Activated T-helper 1 cell treated with anti-CD3 and anti-CD28 coated beads, Interleukin-12 subunit alpha, Interleukin-12 subunit beta, Interleukin-2, Interleukin-4 antibody, amounts not matched to agents 30 ng/mL and 10 ng/mL and 1 ng/mL, durations not matched to agents 14 hours and 24 hours and 36 hours (primary cell): ENCODE measurements at regions of chr2 and their contacts with region 1.

Region 1: DNA sequence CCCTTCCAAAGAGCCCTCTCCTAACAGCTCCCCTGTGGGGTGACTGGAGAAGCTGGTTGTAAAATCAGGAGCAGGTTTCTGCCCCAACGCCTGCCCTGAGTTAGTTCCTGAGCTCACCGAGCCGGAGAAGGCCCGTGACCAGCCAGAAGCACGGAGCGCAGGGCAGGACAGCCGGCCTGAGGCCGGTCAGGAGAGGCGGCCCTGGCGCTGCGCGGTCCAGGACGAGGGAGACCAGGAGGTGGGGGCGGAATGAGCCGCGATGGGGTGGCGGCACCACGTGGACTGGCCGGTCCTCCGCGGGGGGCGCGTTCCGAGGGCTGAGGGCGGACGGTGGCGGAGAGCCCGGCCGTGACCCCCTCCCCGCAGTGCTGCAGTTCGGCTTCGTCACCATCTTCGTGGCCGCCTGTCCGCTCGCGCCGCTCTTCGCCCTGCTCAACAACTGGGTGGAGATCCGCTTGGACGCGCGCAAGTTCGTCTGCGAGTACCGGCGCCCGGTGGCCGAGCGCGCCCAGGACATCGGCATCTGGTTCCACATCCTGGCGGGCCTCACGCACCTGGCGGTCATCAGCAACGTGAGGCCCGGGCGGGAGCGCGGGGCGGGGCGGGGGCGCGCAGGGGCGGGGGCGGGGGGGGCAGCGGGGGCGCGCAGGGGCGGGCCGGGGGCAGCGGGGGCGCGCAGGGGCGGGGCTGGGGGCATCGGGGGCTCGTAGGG is 29.0 kb downstream of the ANO7 start:
- DNase-seq: peak; percentile 20
- H3K4me3 Mint-ChIP-seq: peak overlapping the region; percentile 63
- H3K27ac Mint-ChIP-seq: no peak overlapping the region
- H3K4me1 Mint-ChIP-seq: peaks cover 18% of the 10 kb centered on the region
- H3K27me3 Mint-ChIP-seq: peaks cover 25% of the 10 kb centered on the region

Region 2: GRCh38 chr2:240851078-240851991 is 366.1 kb before region 1 on chr2:
- intact Hi-C with region 1: loop called (anchors 5 kb)
- DNase-seq: peak; percentile 65
- H3K4me3 Mint-ChIP-seq: no peak overlapping the region
- H3K27ac Mint-ChIP-seq: no peak overlapping the region
- H3K4me1 Mint-ChIP-seq: no peaks in the 10 kb centered on the region
- H3K27me3 Mint-ChIP-seq: no peaks in the 10 kb centered on the region

Region 3: DNA sequence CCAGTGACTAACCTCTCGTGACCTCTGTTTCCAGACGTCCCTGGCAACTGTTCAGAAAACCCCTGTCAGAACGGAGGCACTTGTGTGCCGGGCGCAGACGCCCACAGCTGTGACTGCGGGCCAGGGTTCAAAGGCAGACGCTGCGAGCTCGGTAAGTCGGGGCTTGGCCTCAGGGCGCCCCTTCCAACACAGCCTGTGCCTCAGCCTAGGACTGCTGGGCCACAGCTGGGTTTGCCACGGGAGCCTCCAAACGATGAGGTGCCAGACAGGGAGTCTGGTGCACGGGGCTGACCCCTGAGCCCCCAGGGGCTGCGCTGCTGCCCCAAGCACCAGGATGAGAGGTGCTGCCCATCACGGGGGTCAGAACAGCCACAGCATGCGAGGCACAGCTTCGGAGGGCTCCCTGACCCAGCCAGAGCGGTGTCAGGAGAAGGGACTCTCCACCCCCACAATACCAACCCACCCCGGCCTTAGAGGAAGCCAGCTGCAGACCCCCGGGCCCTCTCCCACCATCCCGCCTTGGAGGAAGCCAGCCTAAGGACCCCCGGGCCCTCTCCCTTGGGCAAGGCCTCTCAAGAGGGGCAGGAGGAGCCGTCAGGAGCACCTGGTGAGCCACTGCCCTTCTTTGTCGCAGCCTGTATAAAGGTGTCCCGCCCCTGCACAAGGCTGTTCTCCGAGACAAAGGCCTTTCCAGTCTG is 135.7 kb before region 1 on chr2:
- intact Hi-C with region 1: loop called (anchors 1 kb)
- DNase-seq: no peak
- H3K4me3 Mint-ChIP-seq: no peak overlapping the region
- H3K27ac Mint-ChIP-seq: no peak overlapping the region
- H3K4me1 Mint-ChIP-seq: no peaks in the 10 kb centered on the region
- H3K27me3 Mint-ChIP-seq: no peaks in the 10 kb centered on the region

Region 4: DNA sequence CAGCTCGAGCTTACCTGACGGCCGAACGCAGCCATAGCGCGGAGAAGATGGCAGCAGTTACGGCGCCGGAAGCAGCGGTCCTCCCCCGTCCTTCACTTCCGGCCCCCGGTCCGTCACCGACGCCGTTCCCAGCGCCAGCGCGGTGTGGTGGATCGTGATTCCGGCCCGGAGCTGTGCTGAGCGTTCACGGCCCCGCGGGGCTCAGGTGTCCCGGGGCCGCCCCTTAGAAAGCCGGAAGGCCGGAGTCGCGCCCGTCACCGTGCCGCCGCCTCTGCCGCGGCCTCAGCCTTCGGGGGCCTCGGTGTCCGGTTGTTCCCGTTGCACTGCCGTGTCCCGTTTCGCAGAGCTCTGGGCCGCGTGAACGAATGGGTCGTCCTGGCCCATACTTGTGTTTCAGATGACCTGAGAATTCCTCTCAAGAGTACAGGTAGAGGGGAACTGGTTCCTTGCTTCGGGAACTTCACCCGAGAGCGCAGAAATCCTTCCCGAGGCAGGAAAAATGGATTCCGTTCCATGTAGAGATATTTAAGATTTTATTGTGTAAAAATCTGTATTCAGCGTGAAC is 115.2 kb before region 1 on chr2 and contains the start of gene MTERF4:
- intact Hi-C with region 1: loop called (anchors 2 kb)
- DNase-seq: peak; percentile 86
- H3K4me3 Mint-ChIP-seq: peak within 1 kb of the TSS; percentile 94
- H3K27ac Mint-ChIP-seq: peak within 1 kb of the TSS; percentile 98
- H3K4me1 Mint-ChIP-seq: peaks cover 41% of the 10 kb centered on the region
- H3K27me3 Mint-ChIP-seq: no peaks in the 10 kb centered on the region
- total RNA-seq, gene MTERF4: 40.5 and 43.3 TPM in 2 replicates